ENCODE measurements at regions of chr1 and their contacts with region 1.

Region 1: GRCh38 chr1:167599957-167600581 is 30.0 kb upstream of the RCSD1 start:
- DNase-seq: peak; percentile 38
- H3K4me3 ChIP-seq: no peak overlapping the region
- H3K27ac ChIP-seq: no peak overlapping the region
- H3K4me1 ChIP-seq: peaks cover 0 to 6% of the 10 kb centered on the region in 2 experiments; a peak in 1 of 4 replicates
- H3K27me3 ChIP-seq: no peaks in the 10 kb centered on the region; the same call in 1 of the 2 replicates
- CTCF ChIP-seq: peak; percentile 75
- EP300 ChIP-seq: no peak
- RAD21 ChIP-seq: peak; percentile 79

Region 2: DNA sequence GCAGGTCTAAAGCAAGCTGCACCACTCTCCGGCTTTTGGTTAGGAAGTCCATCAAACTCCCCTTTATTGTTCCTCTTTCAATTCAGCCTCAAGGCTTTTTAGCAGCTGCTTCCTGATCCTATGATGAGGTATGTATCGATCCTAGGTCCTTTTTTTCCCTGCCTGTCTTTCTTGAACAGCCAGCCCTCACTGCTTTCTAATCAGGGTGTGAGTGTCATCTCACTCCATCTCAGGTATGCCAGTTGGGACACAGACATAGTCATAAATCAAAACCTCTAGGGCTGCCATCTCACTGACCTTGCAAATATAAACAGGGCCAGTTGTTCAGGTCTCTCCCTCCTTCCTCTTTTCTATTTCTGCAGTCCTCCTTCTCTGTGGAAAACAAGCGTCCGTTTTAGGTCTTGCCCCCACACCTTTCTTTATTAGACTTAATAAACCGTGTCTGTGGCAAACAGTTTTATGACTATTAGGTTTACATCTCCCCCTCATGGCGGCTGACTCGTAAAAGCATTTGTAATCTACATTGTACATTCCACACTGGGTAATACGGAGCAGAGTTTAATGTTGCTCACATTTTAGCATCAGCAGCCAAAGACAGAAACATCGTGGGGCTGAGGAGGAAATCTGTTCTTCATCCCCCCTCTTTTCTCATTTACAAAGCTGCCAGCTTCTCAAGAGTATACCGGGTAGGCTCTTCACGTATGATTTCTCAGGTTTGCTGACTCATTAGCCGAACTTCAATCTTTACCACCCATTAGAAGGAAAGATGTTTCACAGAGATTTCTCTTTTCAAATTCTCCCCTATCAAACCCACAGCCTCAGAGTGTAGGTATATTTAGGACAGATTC is 494.6 kb before region 1 on chr1:
- CTCF ChIA-PET with region 1: no interaction called
- POLR2A ChIA-PET with region 1: no interaction called
- DNase-seq: no peak
- H3K4me3 ChIP-seq: no peak overlapping the region
- H3K27ac ChIP-seq: no peak overlapping the region
- H3K4me1 ChIP-seq: no peaks in the 10 kb centered on the region
- H3K27me3 ChIP-seq: no peaks in the 10 kb centered on the region
- CTCF ChIP-seq: no peak
- EP300 ChIP-seq: no peak
- RAD21 ChIP-seq: no peak

Region 3: GRCh38 chr1:167454894-167455785 is 144.9 kb before region 1 on chr1:
- CTCF ChIA-PET with region 1: no interaction called
- POLR2A ChIA-PET with region 1: no interaction called
- DNase-seq: peak; percentile 87
- H3K4me3 ChIP-seq: peak overlapping the region; percentile 62 to 87
- H3K27ac ChIP-seq: peak overlapping the region in 1 of 2 experiments; percentile 45; a peak in 1 of 4 replicates
- H3K4me1 ChIP-seq: peaks cover 0 to 8% of the 10 kb centered on the region in 2 experiments; a peak in 1 of 4 replicates
- H3K27me3 ChIP-seq: peaks cover 6% of the 10 kb centered on the region; the same call in 1 of the 2 replicates
- CTCF ChIP-seq: no peak
- EP300 ChIP-seq: no peak
- RAD21 ChIP-seq: no peak

Region 4: GRCh38 chr1:167648978-167649744 is 49.1 kb after region 1 on chr1:
- CTCF ChIA-PET with region 1: no interaction called
- POLR2A ChIA-PET with region 1: no interaction called
- DNase-seq: no peak
- H3K4me3 ChIP-seq: no peak overlapping the region
- H3K27ac ChIP-seq: no peak overlapping the region
- H3K4me1 ChIP-seq: peaks cover 0 to 2% of the 10 kb centered on the region in 2 experiments; a peak in 1 of 4 replicates
- H3K27me3 ChIP-seq: no peaks in the 10 kb centered on the region
- CTCF ChIP-seq: no peak
- EP300 ChIP-seq: no peak
- RAD21 ChIP-seq: no peak

Region 5: GRCh38 chr1:167697667-167698141 is 97.6 kb after region 1 on chr1:
- CTCF ChIA-PET with region 1: interaction called, 20 read pairs
- POLR2A ChIA-PET with region 1: interaction called, 4 read pairs
- DNase-seq: no peak
- H3K4me3 ChIP-seq: no peak overlapping the region
- H3K27ac ChIP-seq: no peak overlapping the region
- H3K4me1 ChIP-seq: no peaks in the 10 kb centered on the region
- H3K27me3 ChIP-seq: no peaks in the 10 kb centered on the region; the same call in 1 of the 2 replicates
- CTCF ChIP-seq: no peak
- EP300 ChIP-seq: no peak
- RAD21 ChIP-seq: no peak